Spleen (tissue), 13 donors: ENCODE measurements at regions of chr9 and their contacts with region 1.

Region 1: DNA sequence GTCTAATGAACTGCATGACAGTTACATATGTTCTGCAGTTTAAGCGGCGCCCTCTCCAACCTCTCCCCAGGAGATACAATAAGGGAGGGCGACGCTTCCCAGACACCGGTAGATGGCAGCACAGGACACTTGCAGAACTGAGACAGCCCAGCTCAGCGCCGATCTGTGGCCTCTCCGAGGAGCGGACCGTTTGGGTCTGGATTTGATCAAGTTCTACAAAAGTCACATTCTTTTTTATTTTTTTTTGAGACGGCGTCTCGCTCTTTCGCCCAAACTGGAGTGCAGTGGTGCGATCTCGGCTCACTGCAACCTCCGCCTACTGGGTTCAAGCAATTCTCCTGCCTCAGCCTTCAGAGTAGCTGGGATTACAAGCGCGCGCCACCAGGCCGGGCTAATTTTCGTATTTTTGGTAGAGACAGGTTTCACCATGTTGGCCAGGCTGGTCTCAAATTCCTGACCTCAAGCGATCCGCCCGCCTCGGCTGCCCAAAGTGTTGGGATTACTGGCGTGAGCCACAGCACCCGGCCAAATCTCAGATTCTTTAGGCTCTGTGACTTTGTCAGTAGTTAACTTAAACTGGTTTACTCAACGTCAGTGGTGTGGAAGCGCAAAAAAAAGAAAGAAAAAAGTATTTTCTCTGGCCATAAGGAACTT is 1.4 kb upstream of the ATOSB start:
- DNase-seq: peak; percentile 96
- H3K4me3 ChIP-seq: peak overlapping the region; percentile 56 to 88 (median 65)
- H3K27ac ChIP-seq: peak overlapping the region; percentile 49 to 96 (median 88)
- H3K4me1 ChIP-seq: peaks cover 28 to 53% (median 45%) of the 10 kb centered on the region in 6 donors
- H3K27me3 ChIP-seq: no peaks in the 10 kb centered on the region
- CTCF ChIP-seq: peak; percentile 84 to 97 (median 93)
- POLR2A ChIP-seq: no peak

Region 2: GRCh38 chr9:34994260-34994899 is 122.6 kb before region 1 on chr9:
- intact Hi-C with region 1: no loop called
- DNase-seq: no peak
- H3K4me3 ChIP-seq: no peak overlapping the region
- H3K27ac ChIP-seq: peak overlapping the region in 7 of 8 donors; percentile 58 to 90 (median 73)
- H3K4me1 ChIP-seq: peaks cover 7 to 86% (median 44%) of the 10 kb centered on the region in 6 donors
- H3K27me3 ChIP-seq: peaks cover 0 to 8% (median 0%) of the 10 kb centered on the region in 7 donors
- CTCF ChIP-seq: peak in 6 of 11 experiments; percentile 32 to 46 (median 40)
- POLR2A ChIP-seq: no peak

Region 3: GRCh38 chr9:35258676-35259474 is 141.8 kb after region 1 on chr9:
- intact Hi-C with region 1: loop called (anchors 5 kb)
- DNase-seq: no peak
- H3K4me3 ChIP-seq: no peak overlapping the region
- H3K27ac ChIP-seq: peak overlapping the region in 2 of 8 donors; percentile 11 to 37
- H3K4me1 ChIP-seq: peaks cover 0 to 14% (median 2%) of the 10 kb centered on the region in 6 donors
- H3K27me3 ChIP-seq: no peaks in the 10 kb centered on the region
- CTCF ChIP-seq: peak in 10 of 11 experiments; percentile 16 to 60 (median 52)
- POLR2A ChIP-seq: no peak

Region 4: DNA sequence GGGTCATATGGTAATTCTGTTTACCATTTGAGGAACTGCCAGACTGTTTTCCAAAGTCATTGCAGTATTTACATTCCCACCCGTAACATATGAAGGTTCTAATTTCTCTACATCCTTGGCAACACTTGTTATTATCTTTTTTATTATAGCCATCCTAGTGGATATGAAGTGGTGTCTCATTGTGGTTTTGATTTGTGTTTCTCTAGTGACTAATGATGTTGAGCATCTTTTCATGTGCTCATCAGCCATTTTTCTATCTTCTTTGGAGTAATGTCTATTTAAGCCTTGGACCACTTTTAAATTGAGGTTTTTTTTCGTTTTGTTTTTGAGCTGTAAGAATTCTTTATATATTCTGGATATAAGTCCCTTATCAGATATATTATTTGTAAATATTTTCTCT is 240.1 kb after region 1 on chr9:
- intact Hi-C with region 1: no loop called
- DNase-seq: no peak
- H3K4me3 ChIP-seq: no peak overlapping the region
- H3K27ac ChIP-seq: no peak overlapping the region
- H3K4me1 ChIP-seq: no peaks in the 10 kb centered on the region
- H3K27me3 ChIP-seq: no peaks in the 10 kb centered on the region
- CTCF ChIP-seq: no peak
- POLR2A ChIP-seq: no peak

Region 5: DNA sequence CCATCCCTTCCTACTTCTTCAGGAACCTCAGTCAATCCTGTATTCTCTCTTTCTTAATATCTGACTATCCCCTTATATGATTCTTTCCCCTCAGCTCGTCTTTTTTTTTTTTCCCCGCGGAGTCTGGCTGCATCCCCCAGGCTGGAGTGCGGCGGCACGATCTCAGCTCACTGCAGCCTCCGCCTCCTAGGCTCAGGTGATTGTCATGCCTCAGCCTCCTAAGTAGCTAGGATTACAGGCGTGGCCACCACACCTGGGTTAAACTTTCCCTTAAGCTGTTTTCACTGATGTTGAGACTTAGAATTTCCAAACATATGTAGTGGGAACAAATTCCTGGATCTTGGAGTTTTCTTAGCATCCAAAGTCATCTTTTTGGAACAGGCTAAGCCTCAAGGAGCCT is 359.6 kb after region 1 on chr9:
- intact Hi-C with region 1: loop called (anchors 5 kb)
- DNase-seq: no peak
- H3K4me3 ChIP-seq: no peak overlapping the region
- H3K27ac ChIP-seq: no peak overlapping the region
- H3K4me1 ChIP-seq: peaks cover 0 to 4% (median 0%) of the 10 kb centered on the region in 6 donors
- H3K27me3 ChIP-seq: peaks cover 0 to 12% (median 0%) of the 10 kb centered on the region in 7 donors
- CTCF ChIP-seq: no peak
- POLR2A ChIP-seq: no peak